WTC11 (cell line): ENCODE measurements at regions of chr1 and their contacts with region 1.

Region 1: DNA sequence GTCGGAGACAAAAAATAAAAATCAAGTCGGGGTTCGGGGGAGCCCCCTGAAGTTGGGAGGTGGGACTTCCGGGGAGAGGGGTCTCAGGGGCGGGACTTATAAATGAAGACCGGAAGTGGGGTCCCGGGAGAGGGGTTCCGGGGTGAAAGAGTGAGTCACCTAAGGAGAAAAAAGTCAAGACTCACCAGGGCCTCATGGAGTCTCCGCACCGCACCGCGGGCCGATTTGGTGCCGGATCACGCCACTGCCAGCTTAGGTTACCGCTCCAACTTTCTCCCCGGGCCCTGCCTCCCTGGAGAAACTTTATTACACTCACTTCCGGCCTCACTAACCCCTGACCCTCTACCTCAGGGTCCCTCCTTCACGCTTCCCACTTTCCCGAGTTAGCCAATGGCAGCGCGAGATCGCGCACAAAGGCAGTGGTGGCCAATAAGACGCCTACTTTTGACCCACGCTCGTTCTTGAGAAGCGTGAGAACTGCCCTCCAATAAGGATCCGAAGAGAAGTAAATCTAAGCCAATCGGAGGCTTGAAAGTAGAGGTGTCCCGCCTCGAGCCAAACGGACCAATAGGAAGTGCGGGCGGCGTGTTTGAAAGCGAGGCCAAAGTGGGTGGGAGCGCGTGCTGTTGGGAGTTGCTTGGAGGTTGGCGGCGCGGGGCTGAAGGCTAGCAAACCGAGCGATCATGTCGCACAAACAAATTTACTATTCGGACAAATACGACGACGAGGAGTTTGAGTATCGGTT is at the start of gene CKS1B:
- DNase-seq: peak; percentile 96
- ATAC-seq: peak; percentile 62
- H3K4me3 Mint-ChIP-seq: no peak within 1 kb of the TSS
- H3K27ac Mint-ChIP-seq: no peak within 1 kb of the TSS
- H3K4me1 Mint-ChIP-seq: peaks cover 28% of the 10 kb centered on the region
- H3K27me3 Mint-ChIP-seq: no peaks in the 10 kb centered on the region
- CTCF ChIP-seq: no peak
- total RNA-seq, gene CKS1B: 258 to 301 TPM (median 278 TPM) in 3 replicates

Region 2: GRCh38 chr1:154361357-154361756 is 612.9 kb before region 1 on chr1:
- CTCF ChIA-PET with region 1: no interaction called
- POLR2A ChIA-PET with region 1: no interaction called
- DNase-seq: no peak
- ATAC-seq: no peak
- H3K4me3 Mint-ChIP-seq: no peak overlapping the region
- H3K27ac Mint-ChIP-seq: no peak overlapping the region
- H3K4me1 Mint-ChIP-seq: peaks cover 9% of the 10 kb centered on the region
- H3K27me3 Mint-ChIP-seq: no peaks in the 10 kb centered on the region; the same call in 1 of the 2 replicates
- CTCF ChIP-seq: no peak

Region 3: GRCh38 chr1:154936555-154937084 is 37.6 kb before region 1 on chr1 and contains the start of gene PMVK:
- CTCF ChIA-PET with region 1: interaction called, 4 read pairs
- POLR2A ChIA-PET with region 1: interaction called, 16 read pairs
- DNase-seq: peak; percentile 93
- ATAC-seq: peak; percentile 87
- H3K4me3 Mint-ChIP-seq: peak within 1 kb of the TSS; percentile 92
- H3K27ac Mint-ChIP-seq: peak within 1 kb of the TSS; percentile 99
- H3K4me1 Mint-ChIP-seq: peaks cover 26% of the 10 kb centered on the region
- H3K27me3 Mint-ChIP-seq: peaks cover 3% of the 10 kb centered on the region; the same call in 1 of the 2 replicates
- CTCF ChIP-seq: no peak
- total RNA-seq, gene PMVK: 26.8 to 38.7 TPM (median 36.8 TPM) in 3 replicates

Region 4: GRCh38 chr1:154943649-154944400 is 30.4 kb before region 1 on chr1:
- CTCF ChIA-PET with region 1: interaction called, 10 read pairs
- POLR2A ChIA-PET with region 1: interaction called, 4 read pairs
- DNase-seq: peak; percentile 68
- ATAC-seq: peak; percentile 81
- H3K4me3 Mint-ChIP-seq: no peak overlapping the region
- H3K27ac Mint-ChIP-seq: peak overlapping the region; percentile 82
- H3K4me1 Mint-ChIP-seq: peaks cover 24% of the 10 kb centered on the region
- H3K27me3 Mint-ChIP-seq: no peaks in the 10 kb centered on the region
- CTCF ChIP-seq: peak; percentile 45

Region 5: DNA sequence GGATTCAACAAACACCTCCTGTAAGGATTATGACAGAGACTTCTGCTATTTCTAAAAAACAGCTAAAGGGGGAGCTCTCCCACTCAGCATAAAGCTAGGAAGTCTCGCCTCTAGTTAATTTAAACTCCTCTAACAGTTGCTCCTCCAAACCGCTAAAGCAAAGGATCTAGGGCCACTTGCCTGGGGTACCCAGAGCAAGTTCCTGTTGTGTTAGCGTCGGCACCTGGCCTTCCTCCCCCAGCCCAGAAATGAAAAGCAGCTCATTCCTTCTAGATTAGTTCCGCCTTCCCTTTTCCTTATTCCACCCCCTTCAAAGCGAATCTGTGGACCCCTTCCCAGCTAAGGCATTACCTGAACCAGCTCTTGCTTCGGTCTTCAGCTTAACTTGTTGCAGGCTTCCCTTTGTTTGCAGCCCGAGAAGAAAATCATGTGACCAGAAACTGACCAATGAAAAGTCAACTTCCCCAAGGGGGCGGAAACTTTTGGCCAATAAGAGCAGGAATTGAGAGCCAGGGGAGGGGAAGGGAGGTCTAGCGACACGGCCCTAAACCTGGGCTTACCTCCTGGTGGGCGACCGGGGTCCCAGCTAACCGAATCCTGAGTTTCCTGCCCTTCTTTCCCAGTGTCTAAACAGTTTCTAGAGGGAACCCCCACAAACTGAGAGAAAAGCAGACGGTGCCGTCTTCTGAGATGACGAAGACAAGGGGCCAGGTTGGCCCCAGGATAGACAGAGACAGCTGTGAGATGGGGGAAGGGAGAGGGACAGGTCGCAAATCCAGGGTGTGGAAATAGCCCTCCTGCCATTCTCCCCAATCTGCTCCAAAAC is 18.3 kb before region 1 on chr1 and contains the start of gene PBXIP1:
- CTCF ChIA-PET with region 1: interaction called, 45 read pairs
- POLR2A ChIA-PET with region 1: interaction called, 66 read pairs
- DNase-seq: peak; percentile 85
- ATAC-seq: peak; percentile 87
- H3K4me3 Mint-ChIP-seq: peak within 1 kb of the TSS; percentile 97
- H3K27ac Mint-ChIP-seq: peak within 1 kb of the TSS; percentile 99
- H3K4me1 Mint-ChIP-seq: peaks cover 53% of the 10 kb centered on the region
- H3K27me3 Mint-ChIP-seq: no peaks in the 10 kb centered on the region
- CTCF ChIP-seq: no peak
- total RNA-seq, gene PBXIP1: 26.5 to 30.7 TPM (median 28.4 TPM) in 3 replicates

Region 6: GRCh38 chr1:154961497-154962262 is 12.6 kb before region 1 on chr1 and contains the start of gene PYGO2:
- CTCF ChIA-PET with region 1: interaction called, 45 read pairs
- POLR2A ChIA-PET with region 1: interaction called, 66 read pairs
- DNase-seq: peak; percentile 83
- ATAC-seq: peak; percentile 66
- H3K4me3 Mint-ChIP-seq: peak within 1 kb of the TSS; percentile 93
- H3K27ac Mint-ChIP-seq: peak within 1 kb of the TSS; percentile 91
- H3K4me1 Mint-ChIP-seq: peaks cover 32% of the 10 kb centered on the region
- H3K27me3 Mint-ChIP-seq: no peaks in the 10 kb centered on the region
- CTCF ChIP-seq: no peak
- total RNA-seq, gene PYGO2: 37.4 to 38.8 TPM (median 38.0 TPM) in 3 replicates